CD4-positive, alpha-beta memory T cell (primary cell): ENCODE measurements at regions of chr19 and their contacts with region 1.

Region 1: DNA sequence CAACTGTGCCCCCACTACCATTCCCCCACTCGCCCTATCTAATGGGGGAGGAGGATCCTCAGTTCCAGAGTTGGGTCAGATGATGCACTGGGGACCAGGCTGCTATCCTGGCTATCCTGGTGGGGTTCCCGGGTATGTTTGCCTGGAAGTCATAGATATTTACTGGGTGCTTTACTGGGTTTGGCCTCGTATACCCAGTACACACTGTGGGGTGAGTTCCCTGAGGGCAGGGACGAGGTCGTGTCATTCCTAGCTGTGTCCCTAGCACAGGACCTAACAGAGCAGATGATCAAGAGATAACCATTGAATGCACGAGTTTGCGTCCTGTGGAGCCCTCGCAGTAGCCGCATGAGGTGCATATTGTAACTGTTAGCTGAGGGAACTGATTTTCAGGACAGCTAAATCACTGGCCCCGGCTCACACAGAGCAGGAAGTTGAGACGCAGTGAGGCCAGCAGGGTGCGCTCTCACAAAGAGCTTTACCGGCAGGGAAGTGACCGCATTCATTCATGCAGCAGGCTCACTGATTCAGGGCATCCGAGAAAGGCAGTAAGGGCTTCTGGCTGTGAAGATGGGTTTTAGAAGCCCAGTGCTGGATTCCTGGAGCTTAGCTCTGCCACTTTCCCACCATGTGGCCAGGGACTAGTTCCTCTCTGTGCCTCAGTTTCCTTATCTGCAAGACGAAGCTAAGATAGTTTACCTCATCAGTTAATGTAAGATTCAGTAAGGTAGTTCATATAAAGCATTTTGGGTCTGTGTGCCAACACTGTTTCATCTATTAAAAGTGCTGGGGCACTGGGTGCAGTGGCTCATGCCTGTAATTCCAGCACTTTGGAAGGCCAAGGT is 6.0 kb downstream of the RUVBL2 start:
- DNase-seq: peak; percentile 64 to 76 (median 69)
- H3K4me3 ChIP-seq: no peak overlapping the region
- H3K4me3 Mint-ChIP-seq: peak overlapping the region in 1 of 8 donors; percentile 8
- H3K27ac ChIP-seq: no peak overlapping the region
- H3K27ac Mint-ChIP-seq: peak overlapping the region in 1 of 7 donors; percentile 46
- H3K4me1 ChIP-seq: peaks cover 3% of the 10 kb centered on the region
- H3K4me1 Mint-ChIP-seq: peaks cover 7 to 24% (median 15%) of the 10 kb centered on the region in 4 donors
- H3K27me3 ChIP-seq: no peaks in the 10 kb centered on the region
- H3K27me3 Mint-ChIP-seq: no peaks in the 10 kb centered on the region

Region 2: DNA sequence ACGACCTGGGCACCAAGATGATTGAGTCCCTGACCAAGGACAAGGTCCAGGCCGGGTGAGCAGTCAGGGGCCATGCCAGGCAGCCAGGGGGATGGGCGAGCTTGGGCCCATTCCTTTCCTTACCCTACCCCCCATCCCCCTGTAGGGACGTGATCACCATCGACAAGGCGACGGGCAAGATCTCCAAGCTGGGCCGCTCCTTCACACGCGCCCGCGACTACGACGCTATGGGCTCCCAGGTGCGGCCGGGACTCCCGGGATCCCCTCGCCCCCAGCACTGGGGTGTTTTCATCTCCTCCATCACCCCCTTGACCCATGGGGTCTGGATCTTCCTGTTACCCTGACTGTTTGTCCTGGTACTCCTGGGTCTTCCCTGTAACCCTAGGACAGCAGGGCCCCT is 10.1 kb after region 1 on chr19:
- CTCF ChIA-PET with region 1: interaction called, 24 read pairs
- POLR2A ChIA-PET with region 1: interaction called, 4 read pairs
- intact Hi-C with region 1: no loop called
- DNase-seq: no peak
- H3K4me3 ChIP-seq: no peak overlapping the region
- H3K4me3 Mint-ChIP-seq: no peak overlapping the region
- H3K27ac ChIP-seq: no peak overlapping the region
- H3K27ac Mint-ChIP-seq: no peak overlapping the region
- H3K4me1 ChIP-seq: no peaks in the 10 kb centered on the region
- H3K4me1 Mint-ChIP-seq: no peaks in the 10 kb centered on the region
- H3K27me3 ChIP-seq: no peaks in the 10 kb centered on the region
- H3K27me3 Mint-ChIP-seq: no peaks in the 10 kb centered on the region

Region 3: GRCh38 chr19:49017666-49018351 is 18.1 kb after region 1 on chr19:
- CTCF ChIA-PET with region 1: interaction called, 22 read pairs
- POLR2A ChIA-PET with region 1: interaction called, 8 read pairs
- intact Hi-C with region 1: no loop called
- DNase-seq: peak; percentile 62 to 76 (median 69)
- H3K4me3 ChIP-seq: peak overlapping the region in 1 of 2 donors; percentile 73
- H3K4me3 Mint-ChIP-seq: peak overlapping the region; percentile 84 to 94 (median 90)
- H3K27ac ChIP-seq: peak overlapping the region; percentile 23
- H3K27ac Mint-ChIP-seq: peak overlapping the region in 4 of 7 donors; percentile 13 to 55 (median 36)
- H3K4me1 ChIP-seq: peaks cover 24% of the 10 kb centered on the region
- H3K4me1 Mint-ChIP-seq: peaks cover 15 to 39% (median 25%) of the 10 kb centered on the region in 4 donors
- H3K27me3 ChIP-seq: no peaks in the 10 kb centered on the region
- H3K27me3 Mint-ChIP-seq: peaks cover 0 to 3% of the 10 kb centered on the region in 2 donors

Region 4: DNA sequence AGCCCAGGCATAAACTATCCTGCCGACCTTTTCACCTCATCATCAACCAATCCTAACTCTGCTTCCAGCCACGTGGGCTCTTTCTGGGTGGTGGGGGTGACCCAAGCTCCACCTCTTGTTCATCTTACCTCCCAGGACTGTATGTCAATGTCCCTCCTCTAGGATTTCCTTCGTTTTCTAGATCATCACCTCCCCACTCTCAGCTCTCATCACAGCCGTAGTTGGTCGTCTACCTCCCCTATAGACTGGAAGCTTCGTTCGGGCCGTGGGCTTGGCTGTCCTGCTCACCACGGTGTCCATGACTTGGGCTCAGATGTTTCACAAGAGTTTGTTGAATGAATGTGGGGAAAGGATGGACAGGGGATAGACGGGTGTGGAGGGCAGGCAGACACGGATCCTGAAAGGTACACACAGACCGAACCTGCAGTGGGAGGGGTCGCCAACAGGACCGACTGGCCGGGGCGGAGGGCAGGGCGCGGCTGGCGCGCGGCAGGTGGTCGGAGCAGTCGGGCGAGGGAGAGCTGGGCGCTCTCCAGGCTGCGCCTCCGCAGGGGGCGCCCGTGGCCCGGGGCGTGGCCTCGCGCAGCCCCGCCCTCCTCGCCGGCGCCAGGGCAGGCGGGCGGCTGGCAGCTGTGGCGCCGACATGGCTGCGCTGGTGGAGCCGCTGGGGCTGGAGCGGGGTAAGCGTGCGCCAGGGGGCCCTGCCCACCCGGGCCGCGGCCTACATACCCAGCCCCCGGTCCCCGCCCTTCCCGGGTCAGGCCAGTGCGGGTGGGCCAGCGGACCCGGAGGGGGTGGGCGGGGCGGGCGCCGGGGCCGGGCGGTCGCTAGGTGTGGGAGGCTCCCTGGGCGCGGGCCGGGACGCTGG is 114.3 kb after region 1 on chr19 and contains the start of gene LIN7B:
- CTCF ChIA-PET with region 1: no interaction called
- POLR2A ChIA-PET with region 1: no interaction called
- intact Hi-C with region 1: no loop called
- DNase-seq: peak; percentile 74 to 89 (median 82)
- H3K4me3 ChIP-seq: peak within 1 kb of the TSS; percentile 14 to 57
- H3K4me3 Mint-ChIP-seq: peak within 1 kb of the TSS; percentile 85 to 95 (median 90)
- H3K27ac ChIP-seq: peak within 1 kb of the TSS; percentile 48
- H3K27ac Mint-ChIP-seq: peak within 1 kb of the TSS; percentile 68 to 95 (median 88)
- H3K4me1 ChIP-seq: peaks cover 25% of the 10 kb centered on the region
- H3K4me1 Mint-ChIP-seq: peaks cover 20 to 42% (median 32%) of the 10 kb centered on the region in 4 donors
- H3K27me3 ChIP-seq: no peaks in the 10 kb centered on the region
- H3K27me3 Mint-ChIP-seq: no peaks in the 10 kb centered on the region
- total RNA-seq, gene LIN7B: 17.7 to 18.6 TPM

Region 5: DNA sequence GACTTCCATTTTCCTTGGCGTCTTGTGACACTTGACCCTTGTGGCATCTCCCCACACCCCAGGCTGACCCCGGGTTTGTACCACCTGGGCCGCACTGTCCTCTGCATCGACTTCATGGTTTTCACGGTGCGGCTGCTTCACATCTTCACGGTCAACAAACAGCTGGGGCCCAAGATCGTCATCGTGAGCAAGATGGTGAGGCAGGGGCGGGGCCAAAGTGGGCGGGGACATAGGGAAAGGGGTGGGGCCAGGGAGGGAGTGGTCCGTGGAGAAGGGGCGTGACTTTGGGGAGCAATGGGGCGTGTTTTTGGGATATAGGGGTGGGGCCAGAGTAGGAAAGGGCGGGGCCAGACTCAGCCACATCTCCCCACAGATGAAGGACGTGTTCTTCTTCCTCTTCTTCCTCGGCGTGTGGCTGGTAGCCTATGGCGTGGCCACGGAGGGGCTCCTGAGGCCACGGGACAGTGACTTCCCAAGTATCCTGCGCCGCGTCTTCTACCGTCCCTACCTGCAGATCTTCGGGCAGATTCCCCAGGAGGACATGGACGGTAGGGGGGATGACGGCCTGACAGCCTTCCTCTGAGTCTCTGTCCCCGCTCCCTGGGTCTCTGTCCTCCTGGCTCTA is 200.6 kb after region 1 on chr19:
- CTCF ChIA-PET with region 1: interaction called, 13 read pairs
- POLR2A ChIA-PET with region 1: no interaction called
- intact Hi-C with region 1: loop called (anchors 2 kb)
- DNase-seq: no peak
- H3K4me3 ChIP-seq: no peak overlapping the region
- H3K4me3 Mint-ChIP-seq: no peak overlapping the region
- H3K27ac ChIP-seq: no peak overlapping the region
- H3K27ac Mint-ChIP-seq: peak overlapping the region in 1 of 7 donors; percentile 15
- H3K4me1 ChIP-seq: no peaks in the 10 kb centered on the region
- H3K4me1 Mint-ChIP-seq: peaks cover 0 to 5% (median 4%) of the 10 kb centered on the region in 4 donors
- H3K27me3 ChIP-seq: no peaks in the 10 kb centered on the region
- H3K27me3 Mint-ChIP-seq: peaks cover 4% of the 10 kb centered on the region in 2 donors